IMR-90 (cell line): ENCODE measurements at regions of chr7 and their contacts with region 1.

Region 1: DNA sequence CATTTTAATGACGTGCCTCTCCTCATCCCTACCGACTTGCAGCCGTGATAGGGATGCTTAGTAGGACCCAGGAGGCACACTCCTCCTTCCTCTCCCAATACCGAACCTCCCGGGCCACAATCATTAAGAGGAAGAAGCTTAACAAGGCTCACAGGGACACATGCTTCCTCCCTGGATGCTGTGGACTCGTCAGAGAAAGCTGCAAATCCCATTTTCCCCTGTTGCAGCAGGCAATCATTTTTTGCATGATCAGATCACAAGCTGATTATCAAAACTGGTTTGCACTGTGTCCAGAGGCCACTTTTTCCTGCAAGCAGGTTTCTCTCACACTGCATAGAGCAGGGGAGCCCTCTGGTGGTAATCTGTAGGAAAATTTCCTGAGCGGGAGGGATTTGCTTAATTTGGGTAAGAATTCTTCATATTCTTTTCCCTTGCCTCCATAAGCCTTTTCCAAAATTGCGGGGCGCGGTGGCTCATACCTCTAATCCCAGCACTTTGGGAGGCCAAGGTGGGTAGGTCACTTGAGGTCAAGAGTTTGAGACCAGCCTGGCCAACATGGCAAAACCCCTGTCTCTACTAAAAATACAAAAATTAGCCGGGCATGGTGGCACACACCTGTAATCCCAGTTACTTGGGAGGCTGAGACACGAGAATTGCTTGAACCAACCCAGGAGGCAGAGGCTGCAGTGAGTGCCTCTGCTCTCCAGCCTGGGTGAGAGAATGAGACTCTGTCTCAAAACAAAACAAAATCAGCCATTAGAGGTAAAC is 16.1 kb upstream of the LAMB4 start:
- DNase-seq: peak; percentile 86
- ATAC-seq: peak; percentile 90
- H3K4me3 ChIP-seq: no peak overlapping the region
- H3K27ac ChIP-seq: peak overlapping the region; percentile 12; the same call in 1 of the 2 replicates
- H3K4me1 ChIP-seq: peaks cover 2% of the 10 kb centered on the region; the same call in 1 of the 2 replicates
- H3K27me3 ChIP-seq: no peaks in the 10 kb centered on the region
- CTCF ChIP-seq: peak; percentile 95
- POLR2A ChIP-seq: peak; percentile 54; the same call in 1 of the 2 replicates
- RAD21 ChIP-seq: peak; percentile 99

Region 2: GRCh38 chr7:107743567-107744344 is 402.5 kb before region 1 on chr7 and contains the start of gene CBLL1:
- CTCF ChIA-PET with region 1: no interaction called
- POLR2A ChIA-PET with region 1: no interaction called
- dilution Hi-C with region 1: no loop called
- in situ Hi-C with region 1: loop called (anchors 25 kb)
- intact Hi-C with region 1: loop called (anchors 5 kb)
- DNase-seq: peak; percentile 94
- ATAC-seq: peak; percentile 98
- H3K4me3 ChIP-seq: peak within 1 kb of the TSS; percentile 87
- H3K27ac ChIP-seq: peak within 1 kb of the TSS; percentile 93
- H3K4me1 ChIP-seq: peaks cover 8% of the 10 kb centered on the region
- H3K27me3 ChIP-seq: no peaks in the 10 kb centered on the region
- CTCF ChIP-seq: peak; percentile 85
- POLR2A ChIP-seq: peak; percentile 79
- RAD21 ChIP-seq: peak; percentile 59
- total RNA-seq, gene CBLL1: 15.6 and 20.3 TPM in 2 replicates

Region 3: GRCh38 chr7:107938456-107939234 is 207.6 kb before region 1 on chr7:
- CTCF ChIA-PET with region 1: interaction called, 5 read pairs
- POLR2A ChIA-PET with region 1: no interaction called
- dilution Hi-C with region 1: no loop called
- in situ Hi-C with region 1: no loop called
- intact Hi-C with region 1: loop called (anchors 1 kb)
- DNase-seq: no peak
- ATAC-seq: peak; percentile 7
- H3K4me3 ChIP-seq: no peak overlapping the region
- H3K27ac ChIP-seq: peak overlapping the region; percentile 21; the same call in 1 of the 2 replicates
- H3K4me1 ChIP-seq: peaks cover 25% of the 10 kb centered on the region
- H3K27me3 ChIP-seq: no peaks in the 10 kb centered on the region
- CTCF ChIP-seq: no peak
- POLR2A ChIP-seq: no peak
- RAD21 ChIP-seq: no peak

Region 4: GRCh38 chr7:107995184-107996071 is 150.8 kb before region 1 on chr7:
- CTCF ChIA-PET with region 1: interaction called, 3 read pairs
- POLR2A ChIA-PET with region 1: interaction called, 5 read pairs
- dilution Hi-C with region 1: loop called (anchors 25 kb)
- in situ Hi-C with region 1: no loop called
- intact Hi-C with region 1: loop called (anchors 1 kb)
- DNase-seq: peak; percentile 85
- ATAC-seq: peak; percentile 74
- H3K4me3 ChIP-seq: no peak overlapping the region
- H3K27ac ChIP-seq: peak overlapping the region; percentile 84
- H3K4me1 ChIP-seq: peaks cover 23% of the 10 kb centered on the region
- H3K27me3 ChIP-seq: no peaks in the 10 kb centered on the region
- CTCF ChIP-seq: no peak
- POLR2A ChIP-seq: no peak
- RAD21 ChIP-seq: no peak

Region 5: GRCh38 chr7:108016841-108017775 is 129.1 kb before region 1 on chr7:
- CTCF ChIA-PET with region 1: interaction called, 6 read pairs
- POLR2A ChIA-PET with region 1: no interaction called
- dilution Hi-C with region 1: loop called (anchors 25 kb)
- in situ Hi-C with region 1: no loop called
- intact Hi-C with region 1: no loop called
- DNase-seq: peak; percentile 70
- ATAC-seq: peak; percentile 66
- H3K4me3 ChIP-seq: no peak overlapping the region
- H3K27ac ChIP-seq: peak overlapping the region; percentile 31; the same call in 1 of the 2 replicates
- H3K4me1 ChIP-seq: peaks cover 13% of the 10 kb centered on the region
- H3K27me3 ChIP-seq: no peaks in the 10 kb centered on the region
- CTCF ChIP-seq: peak; percentile 43
- POLR2A ChIP-seq: no peak
- RAD21 ChIP-seq: peak; percentile 36

Region 6: GRCh38 chr7:109336531-109336930 is 1190.3 kb after region 1 on chr7:
- CTCF ChIA-PET with region 1: no interaction called
- POLR2A ChIA-PET with region 1: no interaction called
- dilution Hi-C with region 1: no loop called
- in situ Hi-C with region 1: no loop called
- intact Hi-C with region 1: no loop called
- DNase-seq: no peak
- ATAC-seq: no peak
- H3K4me3 ChIP-seq: no peak overlapping the region
- H3K27ac ChIP-seq: no peak overlapping the region
- H3K4me1 ChIP-seq: no peaks in the 10 kb centered on the region
- H3K27me3 ChIP-seq: no peaks in the 10 kb centered on the region
- CTCF ChIP-seq: no peak
- POLR2A ChIP-seq: no peak
- RAD21 ChIP-seq: no peak